GM10248 (cell line): ENCODE measurements at regions of chr4 and their contacts with region 1.

Region 1: GRCh38 chr4:8917868-8918783 is 46.5 kb upstream of the HMX1 start:
- DNase-seq: peak; percentile 81
- CTCF ChIP-seq: peak; percentile 94

Region 2: DNA sequence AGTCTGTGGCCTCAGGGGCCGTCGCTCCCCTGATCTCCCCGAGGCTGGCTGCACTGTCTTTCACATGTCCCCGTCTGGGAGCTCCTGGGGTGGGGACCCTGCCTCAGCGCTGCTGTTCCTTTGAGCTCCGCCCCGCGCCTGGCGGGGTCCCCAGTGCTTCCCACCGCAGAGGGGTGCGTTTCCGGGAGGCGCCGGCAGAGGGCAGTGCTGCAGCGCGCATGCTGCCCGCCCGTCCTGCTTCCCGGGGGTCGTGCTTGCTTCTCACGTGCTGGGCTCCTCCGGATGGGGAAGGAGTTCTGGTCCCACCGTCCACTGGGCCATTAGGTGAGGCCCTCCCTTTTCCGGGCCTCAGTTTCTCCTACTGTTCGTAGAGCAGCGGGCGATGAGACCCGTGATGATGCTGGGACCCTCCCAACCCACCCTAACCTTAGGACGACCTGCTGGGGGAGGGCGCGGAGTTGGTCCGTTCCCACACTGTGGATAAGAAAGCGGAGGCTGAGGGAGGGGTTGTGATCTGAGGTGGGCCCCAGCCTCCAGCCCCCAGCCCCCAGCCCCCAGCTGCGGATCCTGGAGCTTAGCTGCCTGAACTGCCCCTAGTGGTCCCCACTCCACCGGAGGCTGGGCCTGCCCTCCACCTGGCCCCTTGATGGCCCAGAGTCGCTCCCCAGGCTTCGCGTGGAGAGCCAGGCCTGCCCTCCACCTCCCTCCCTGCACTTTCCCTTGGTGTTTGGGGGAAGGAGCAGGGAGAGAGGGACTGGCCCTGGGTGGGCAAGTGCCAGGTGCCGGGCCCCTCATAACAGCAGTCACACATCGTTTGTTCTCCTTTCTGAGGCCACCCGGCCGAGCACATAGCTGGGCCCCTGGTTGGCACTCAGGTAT is 310.3 kb before region 1 on chr4:
- CTCF ChIA-PET with region 1: interaction called, 41 read pairs
- POLR2A ChIA-PET with region 1: no interaction called
- DNase-seq: peak; percentile 79
- CTCF ChIP-seq: peak; percentile 72